ENCODE measurements at regions of chr12 and their contacts with region 1.

Region 1: GRCh38 chr12:122190842-122191668 is 8.1 kb downstream of the LRRC43 start:
- DNase-seq: peak; percentile 71 to 86 (median 80)
- H3K4me3 ChIP-seq: no peak overlapping the region
- H3K27ac ChIP-seq: no peak overlapping the region
- H3K4me1 ChIP-seq: no peaks in the 10 kb centered on the region
- H3K27me3 ChIP-seq: no peaks in the 10 kb centered on the region

Region 2: GRCh38 chr12:122130150-122130549 is 60.9 kb before region 1 on chr12:
- CTCF ChIA-PET with region 1: interaction called, 27 read pairs
- POLR2A ChIA-PET with region 1: no interaction called
- DNase-seq: no peak
- H3K4me3 ChIP-seq: no peak overlapping the region
- H3K27ac ChIP-seq: no peak overlapping the region
- H3K4me1 ChIP-seq: peaks cover 0 to 3% (median 0%) of the 10 kb centered on the region in 4 experiments
- H3K27me3 ChIP-seq: no peaks in the 10 kb centered on the region

Region 3: GRCh38 chr12:122148657-122149056 is 42.4 kb before region 1 on chr12:
- CTCF ChIA-PET with region 1: interaction called, 14 read pairs
- POLR2A ChIA-PET with region 1: no interaction called
- DNase-seq: no peak
- H3K4me3 ChIP-seq: no peak overlapping the region
- H3K27ac ChIP-seq: no peak overlapping the region
- H3K4me1 ChIP-seq: peaks cover 0 to 1% (median 0%) of the 10 kb centered on the region in 4 experiments
- H3K27me3 ChIP-seq: no peaks in the 10 kb centered on the region

Region 4: GRCh38 chr12:122336015-122336946 is 145.2 kb after region 1 on chr12:
- CTCF ChIA-PET with region 1: no interaction called
- POLR2A ChIA-PET with region 1: no interaction called
- DNase-seq: peak; percentile 59 to 76 (median 74)
- H3K4me3 ChIP-seq: no peak overlapping the region
- H3K27ac ChIP-seq: peak overlapping the region in 1 of 2 experiments; percentile 34
- H3K4me1 ChIP-seq: no peaks in the 10 kb centered on the region
- H3K27me3 ChIP-seq: no peaks in the 10 kb centered on the region

Measured in common myeloid progenitor, CD34-positive (primary cell).